CD14-positive monocyte (primary cell): ENCODE measurements at regions of chr10 and their contacts with region 1.

Region 1: DNA sequence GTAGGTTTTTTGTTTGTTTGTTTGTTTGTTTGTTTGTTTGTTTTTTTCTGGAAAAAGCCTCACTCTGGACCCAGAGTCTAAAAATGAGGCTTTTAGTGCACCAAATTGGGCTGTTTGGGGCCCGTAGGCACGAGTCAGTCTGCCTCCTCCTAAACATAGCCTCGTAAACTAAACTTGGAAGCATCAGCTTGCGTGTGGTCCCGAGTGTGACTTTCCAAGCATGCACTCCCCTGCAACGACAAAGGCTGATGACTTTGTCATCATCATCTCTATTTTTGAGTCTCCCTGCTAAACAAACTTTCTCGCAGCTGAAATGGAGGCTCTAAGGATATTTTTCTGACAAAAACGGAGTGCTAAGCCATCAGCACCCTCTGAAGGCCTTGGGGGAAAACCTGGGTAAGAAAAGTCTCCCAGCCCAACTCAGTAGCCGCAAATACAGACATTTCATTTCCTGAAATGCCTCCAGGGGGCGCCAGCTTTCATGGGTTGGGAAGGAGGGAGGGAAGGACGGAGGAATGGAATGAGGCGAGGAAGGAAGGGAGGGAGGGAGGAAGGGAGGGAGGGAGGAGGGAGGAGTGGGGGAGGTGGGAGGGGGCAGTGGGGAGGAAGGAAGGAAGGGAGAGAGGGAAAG is 245.9 kb downstream of the KCNMA1 start:
- DNase-seq: peak; percentile 3 to 41 (median 6)
- H3K4me3 ChIP-seq: no peak overlapping the region
- H3K4me3 Mint-ChIP-seq: no peak overlapping the region
- H3K27ac ChIP-seq: no peak overlapping the region
- H3K27ac Mint-ChIP-seq: no peak overlapping the region
- H3K4me1 ChIP-seq: no peaks in the 10 kb centered on the region
- H3K4me1 Mint-ChIP-seq: no peaks in the 10 kb centered on the region
- H3K27me3 ChIP-seq: peaks cover 5 to 17% of the 10 kb centered on the region in 2 donors
- H3K27me3 Mint-ChIP-seq: peaks cover 7 to 26% (median 24%) of the 10 kb centered on the region in 3 donors
- CTCF ChIP-seq: peak; percentile 53

Region 2: DNA sequence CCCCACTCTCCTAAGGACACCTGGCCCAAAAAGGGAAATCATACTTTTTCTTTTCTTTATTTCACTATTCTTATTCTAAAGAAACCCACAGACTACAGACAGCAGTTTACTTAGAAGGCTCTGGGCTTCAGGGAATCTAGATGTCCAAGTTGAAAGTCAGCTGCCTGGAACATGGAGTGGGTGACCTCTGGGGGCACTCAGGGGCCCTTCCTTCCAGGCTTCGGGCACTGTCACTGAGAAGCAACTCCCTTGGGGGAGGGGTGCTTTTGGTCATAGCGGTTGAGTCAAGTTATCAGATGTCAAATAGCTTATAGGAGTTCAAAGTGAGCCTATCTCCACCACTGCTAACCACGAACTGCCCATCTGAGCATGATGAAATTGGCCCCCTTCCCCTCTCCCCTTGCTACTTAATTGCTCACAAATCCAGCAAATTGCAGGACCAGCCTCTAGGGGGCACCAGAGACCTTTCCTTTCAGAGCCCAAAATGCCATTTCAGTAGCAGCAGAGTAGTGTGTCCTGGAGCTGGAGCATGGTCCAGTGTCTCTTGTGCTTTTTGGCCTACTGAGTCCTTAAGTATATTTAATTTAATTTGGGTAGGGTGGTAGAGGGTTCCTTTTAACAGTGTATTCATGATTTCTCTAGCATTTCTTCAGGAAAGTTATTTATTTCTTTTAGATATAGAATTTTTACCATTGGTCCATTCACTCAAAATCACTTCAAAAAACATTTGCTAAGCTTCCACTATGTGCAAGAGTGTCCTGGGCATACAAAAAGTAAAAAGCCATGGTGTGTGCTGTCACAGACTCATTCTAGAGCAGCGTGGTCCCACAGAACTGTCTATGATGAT is 217.9 kb before region 1 on chr10:
- intact Hi-C with region 1: loop called in 1 of 2 experiments (anchors 10 kb)
- DNase-seq: peak; percentile 56 to 72 (median 70)
- H3K4me3 ChIP-seq: no peak overlapping the region
- H3K4me3 Mint-ChIP-seq: no peak overlapping the region
- H3K27ac ChIP-seq: no peak overlapping the region
- H3K27ac Mint-ChIP-seq: no peak overlapping the region
- H3K4me1 ChIP-seq: no peaks in the 10 kb centered on the region
- H3K4me1 Mint-ChIP-seq: peaks cover 4% of the 10 kb centered on the region
- H3K27me3 ChIP-seq: no peaks in the 10 kb centered on the region
- H3K27me3 Mint-ChIP-seq: peaks cover 4% of the 10 kb centered on the region in 3 donors
- CTCF ChIP-seq: peak; percentile 96

Region 3: DNA sequence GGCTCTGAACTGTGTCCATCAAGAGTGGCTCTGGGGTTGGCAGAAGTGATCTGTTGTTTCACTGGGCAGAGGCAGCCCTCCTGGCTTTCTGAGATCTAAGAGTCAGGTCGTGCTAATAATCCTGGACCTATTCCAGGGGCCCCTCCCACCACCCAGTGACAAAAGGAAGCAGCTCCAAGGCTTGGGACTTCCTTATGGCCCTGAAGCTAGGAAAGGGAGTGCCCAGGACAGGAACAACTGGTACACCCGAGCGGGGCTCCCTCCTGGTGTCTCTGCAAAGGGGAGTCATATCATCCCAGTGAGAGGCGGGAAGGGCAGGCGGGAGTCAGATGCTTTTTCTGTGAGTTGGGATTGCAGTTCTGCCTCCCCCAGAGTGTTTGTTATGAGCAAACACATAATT is 674.3 kb after region 1 on chr10:
- intact Hi-C with region 1: no loop called
- DNase-seq: no peak
- H3K4me3 ChIP-seq: no peak overlapping the region
- H3K4me3 Mint-ChIP-seq: no peak overlapping the region
- H3K27ac ChIP-seq: no peak overlapping the region
- H3K27ac Mint-ChIP-seq: no peak overlapping the region
- H3K4me1 ChIP-seq: no peaks in the 10 kb centered on the region
- H3K4me1 Mint-ChIP-seq: no peaks in the 10 kb centered on the region
- H3K27me3 ChIP-seq: no peaks in the 10 kb centered on the region
- H3K27me3 Mint-ChIP-seq: peaks cover 1 to 2% (median 2%) of the 10 kb centered on the region in 3 donors
- CTCF ChIP-seq: no peak